Sigmoid colon (tissue), 7 donors: ENCODE measurements at regions of chr13 and their contacts with region 1.

Region 1: DNA sequence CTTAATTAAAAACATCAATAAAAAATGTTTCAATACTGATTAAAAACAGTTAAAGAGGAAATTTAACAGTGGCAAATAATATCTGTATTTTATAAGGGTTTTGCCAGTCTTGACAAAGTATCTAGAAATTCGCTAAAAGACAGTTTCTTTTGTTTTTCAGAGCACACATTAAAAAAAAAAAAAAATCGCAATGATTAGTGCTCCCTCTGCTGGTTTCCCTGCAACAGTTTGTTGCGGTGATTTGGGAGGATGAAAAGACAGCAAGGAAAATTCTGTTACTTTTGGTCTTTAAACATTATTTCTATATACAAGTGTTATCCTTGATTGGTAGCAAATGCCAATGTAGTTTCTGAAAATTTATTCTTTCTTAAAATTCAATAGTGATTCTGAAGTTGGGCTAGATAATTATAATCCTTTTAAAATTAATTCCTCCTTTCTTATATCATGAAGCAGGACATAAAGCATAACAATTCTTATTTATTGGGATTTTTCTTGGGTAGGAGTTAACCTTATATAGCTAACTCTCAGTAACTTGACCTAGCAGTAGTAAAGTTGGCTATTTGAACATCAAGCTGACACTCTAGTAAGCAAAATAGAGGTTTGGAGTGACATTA is 23.1 kb upstream of the SPRY2 start:
- DNase-seq: no peak
- H3K4me3 ChIP-seq: peak overlapping the region in 1 of 4 donors; percentile 12
- H3K27ac ChIP-seq: no peak overlapping the region
- H3K4me1 ChIP-seq: peaks cover 0 to 4% (median 0%) of the 10 kb centered on the region in 4 donors
- H3K27me3 ChIP-seq: no peaks in the 10 kb centered on the region
- CTCF ChIP-seq: peak; percentile 23 to 70 (median 58)
- EP300 ChIP-seq: no peak
- POLR2A ChIP-seq: no peak

Region 2: GRCh38 chr13:80850771-80851170 is 486.8 kb after region 1 on chr13:
- intact Hi-C with region 1: no loop called
- DNase-seq: no peak
- H3K4me3 ChIP-seq: no peak overlapping the region
- H3K27ac ChIP-seq: no peak overlapping the region
- H3K4me1 ChIP-seq: no peaks in the 10 kb centered on the region
- H3K27me3 ChIP-seq: no peaks in the 10 kb centered on the region
- CTCF ChIP-seq: no peak
- EP300 ChIP-seq: no peak
- POLR2A ChIP-seq: no peak

Region 3: GRCh38 chr13:81017513-81018152 is 653.6 kb after region 1 on chr13:
- intact Hi-C with region 1: loop called (anchors 10 kb)
- DNase-seq: no peak
- H3K4me3 ChIP-seq: no peak overlapping the region
- H3K27ac ChIP-seq: no peak overlapping the region
- H3K4me1 ChIP-seq: no peaks in the 10 kb centered on the region
- H3K27me3 ChIP-seq: no peaks in the 10 kb centered on the region
- CTCF ChIP-seq: peak in 3 of 4 experiments; percentile 23 to 44 (median 25)
- EP300 ChIP-seq: no peak
- POLR2A ChIP-seq: no peak